Caco-2 (cell line): ENCODE measurements at regions of chr20 and their contacts with region 1.

Region 1: DNA sequence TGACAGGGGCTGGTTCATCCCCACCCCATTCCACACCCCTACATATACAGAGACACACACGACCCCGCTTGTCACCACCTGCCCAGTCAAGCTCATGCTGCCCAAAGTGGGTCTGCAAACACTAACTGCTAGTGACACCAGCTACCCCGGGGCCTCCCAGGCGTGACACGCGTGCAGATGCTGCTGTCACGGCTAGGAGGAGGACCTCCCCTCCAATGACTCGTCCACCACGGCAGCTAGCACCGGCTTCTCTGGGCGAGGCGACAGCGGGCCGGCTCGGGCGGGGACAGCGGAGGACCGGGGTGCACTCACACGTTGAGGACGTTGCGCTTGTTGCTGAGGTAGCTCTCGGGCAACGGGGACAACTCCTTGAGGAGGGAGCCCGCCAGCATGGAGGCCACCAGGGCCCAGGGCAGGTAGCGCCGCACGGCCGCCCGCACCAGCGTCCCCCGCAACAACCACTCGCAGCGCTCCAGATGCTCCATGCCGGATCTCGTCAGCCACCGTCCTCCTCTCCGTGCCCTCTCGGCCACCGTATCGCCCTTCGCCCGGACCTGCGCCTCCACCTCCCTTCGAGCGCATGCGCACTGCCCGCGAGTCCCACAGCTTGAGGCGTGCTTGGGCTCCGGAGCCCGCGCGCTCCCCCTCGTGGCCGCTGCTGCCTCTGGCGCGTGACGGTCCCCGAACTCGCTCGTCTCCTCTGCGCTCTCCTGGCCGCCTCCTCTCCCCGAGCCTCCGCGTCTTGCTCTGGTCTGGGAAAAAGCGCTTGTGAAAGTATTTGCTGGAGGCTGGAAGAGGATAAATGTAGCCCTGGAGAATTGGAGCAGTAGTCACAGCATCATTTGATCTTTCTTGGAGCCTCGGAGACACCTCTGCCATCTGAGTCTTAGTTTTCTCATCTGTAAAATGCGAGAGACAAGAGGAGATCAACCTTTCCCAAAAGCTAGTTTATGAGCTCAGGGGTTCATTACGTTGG is at the start of gene FITM2:
- DNase-seq: peak; percentile 100
- H3K4me3 ChIP-seq: peak within 1 kb of the TSS; percentile 77
- H3K4me3 Mint-ChIP-seq: peak within 1 kb of the TSS; percentile 84
- H3K27ac Mint-ChIP-seq: peak within 1 kb of the TSS; percentile 48
- H3K4me1 ChIP-seq: peaks cover 10% of the 10 kb centered on the region
- H3K4me1 Mint-ChIP-seq: peaks cover 13% of the 10 kb centered on the region
- H3K27me3 ChIP-seq: no peaks in the 10 kb centered on the region
- H3K27me3 Mint-ChIP-seq: no peaks in the 10 kb centered on the region
- CTCF ChIP-seq: peak; percentile 100
- total RNA-seq, gene FITM2: 13.9 and 14.4 TPM in 2 replicates

Region 2: DNA sequence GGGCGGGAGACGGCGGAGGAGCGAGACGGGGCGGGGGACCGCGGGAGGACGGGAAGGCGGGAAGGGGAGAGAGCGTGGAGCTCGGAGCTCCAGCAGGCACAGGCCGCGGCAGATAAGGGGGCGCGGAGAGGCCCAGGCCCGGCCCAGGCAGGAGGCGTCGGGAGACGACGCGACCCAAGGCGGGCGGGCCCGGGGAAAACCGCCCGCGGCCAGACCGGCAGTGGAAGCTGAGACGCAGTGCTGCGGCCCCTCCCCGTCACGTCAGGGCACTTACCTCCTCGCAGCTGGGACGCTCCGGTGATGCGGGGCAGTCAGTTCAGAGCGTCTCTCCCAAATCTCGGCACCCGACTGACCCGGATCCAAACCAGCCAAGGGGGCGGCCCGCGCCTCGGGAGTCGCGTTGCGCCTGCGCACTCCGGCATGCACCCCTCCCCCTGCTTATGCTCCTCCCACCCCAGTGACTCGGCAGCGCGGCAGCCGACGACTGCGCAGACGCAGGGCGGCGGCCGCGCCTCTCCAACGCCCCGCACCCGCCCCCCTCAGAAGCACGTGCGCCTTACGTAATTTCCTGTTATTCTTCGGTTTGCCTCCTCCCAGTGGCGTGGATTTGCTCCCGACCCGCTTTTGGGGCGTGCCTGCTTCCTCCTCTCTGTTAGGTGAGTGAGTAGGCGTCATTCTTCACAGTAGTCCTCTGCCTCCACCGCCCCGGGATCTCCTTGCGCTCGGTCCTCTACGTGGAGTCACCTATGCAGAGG is 100.4 kb before region 1 on chr20 and contains the start of gene OSER1:
- CTCF ChIA-PET with region 1: interaction called, 244 read pairs
- POLR2A ChIA-PET with region 1: no interaction called
- intact Hi-C with region 1: no loop called
- DNase-seq: peak; percentile 100
- H3K4me3 ChIP-seq: peak within 1 kb of the TSS; percentile 74
- H3K4me3 Mint-ChIP-seq: peak within 1 kb of the TSS; percentile 95
- H3K27ac Mint-ChIP-seq: peak within 1 kb of the TSS; percentile 96
- H3K4me1 ChIP-seq: peaks cover 19% of the 10 kb centered on the region
- H3K4me1 Mint-ChIP-seq: peaks cover 27% of the 10 kb centered on the region
- H3K27me3 ChIP-seq: no peaks in the 10 kb centered on the region
- H3K27me3 Mint-ChIP-seq: no peaks in the 10 kb centered on the region
- CTCF ChIP-seq: no peak
- total RNA-seq, gene OSER1: 79.7 and 82.3 TPM in 2 replicates

Region 3: DNA sequence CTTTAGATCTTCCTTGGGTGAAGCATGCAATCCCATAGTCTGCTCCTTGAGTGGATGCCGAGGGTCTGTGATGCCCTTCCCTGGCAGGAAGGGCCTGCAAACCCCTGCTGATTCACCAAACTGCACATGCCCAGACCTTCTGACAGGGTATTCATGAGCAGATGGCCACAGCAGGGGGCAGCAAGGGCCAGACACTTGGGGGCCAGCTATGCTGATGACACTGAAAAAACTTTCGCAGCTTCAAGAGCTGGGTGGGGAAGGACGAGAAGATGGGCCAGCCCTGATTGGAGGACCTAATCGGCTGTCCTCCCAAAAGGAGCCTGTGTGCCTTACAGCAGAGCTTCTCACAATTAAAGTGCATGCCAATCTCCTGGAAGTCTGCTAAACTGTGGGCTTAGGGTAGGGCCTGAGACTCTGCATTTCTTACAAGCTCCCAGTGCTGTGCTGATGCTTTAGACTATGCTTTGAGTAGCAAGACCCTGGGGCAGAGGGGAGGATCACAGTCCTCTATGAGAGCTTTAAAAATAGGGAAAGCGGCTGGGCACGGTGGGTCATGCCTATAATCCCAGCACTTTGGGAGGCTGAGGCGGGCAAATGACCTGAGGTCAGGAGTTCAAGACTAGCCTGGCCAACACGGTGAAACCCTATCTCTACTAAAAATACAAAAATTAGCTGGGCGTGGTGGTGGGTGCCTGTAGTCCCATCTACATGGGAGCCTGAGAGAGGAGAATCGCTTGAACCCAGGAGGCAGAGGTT is 79.1 kb before region 1 on chr20:
- CTCF ChIA-PET with region 1: interaction called, 17 read pairs
- POLR2A ChIA-PET with region 1: interaction called, 3 read pairs
- intact Hi-C with region 1: no loop called
- DNase-seq: peak; percentile 48 to 51
- H3K4me3 ChIP-seq: no peak overlapping the region
- H3K4me3 Mint-ChIP-seq: no peak overlapping the region
- H3K27ac Mint-ChIP-seq: no peak overlapping the region
- H3K4me1 ChIP-seq: no peaks in the 10 kb centered on the region
- H3K4me1 Mint-ChIP-seq: peaks cover 12% of the 10 kb centered on the region
- H3K27me3 ChIP-seq: no peaks in the 10 kb centered on the region
- H3K27me3 Mint-ChIP-seq: no peaks in the 10 kb centered on the region
- CTCF ChIP-seq: peak in 1 of 2 experiments; percentile 22

Region 4: DNA sequence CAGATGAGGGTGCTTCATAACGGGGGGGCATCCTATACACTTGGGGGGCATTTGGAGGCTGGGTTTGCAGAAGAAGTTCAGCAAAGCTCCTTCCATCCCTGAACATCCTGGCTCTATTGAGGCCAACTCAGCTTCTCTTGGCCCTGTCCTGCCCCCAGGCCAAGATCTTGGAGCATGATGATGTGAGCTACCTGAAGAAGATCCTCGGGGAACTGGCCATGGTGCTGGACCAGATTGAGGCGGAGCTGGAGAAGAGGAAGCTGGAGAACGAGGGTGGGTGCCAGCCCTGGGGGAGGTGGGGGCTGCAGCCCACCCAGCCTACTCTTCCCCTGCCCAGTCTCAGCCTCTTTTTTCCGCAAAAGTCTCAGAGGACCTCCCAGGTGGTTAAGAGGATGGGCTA is 46.7 kb before region 1 on chr20:
- CTCF ChIA-PET with region 1: interaction called, 22 read pairs
- POLR2A ChIA-PET with region 1: no interaction called
- intact Hi-C with region 1: no loop called
- DNase-seq: peak; percentile 63 to 70
- H3K4me3 ChIP-seq: no peak overlapping the region
- H3K4me3 Mint-ChIP-seq: no peak overlapping the region
- H3K27ac Mint-ChIP-seq: no peak overlapping the region
- H3K4me1 ChIP-seq: no peaks in the 10 kb centered on the region
- H3K4me1 Mint-ChIP-seq: no peaks in the 10 kb centered on the region
- H3K27me3 ChIP-seq: no peaks in the 10 kb centered on the region
- H3K27me3 Mint-ChIP-seq: peaks cover 14% of the 10 kb centered on the region
- CTCF ChIP-seq: no peak

Region 5: DNA sequence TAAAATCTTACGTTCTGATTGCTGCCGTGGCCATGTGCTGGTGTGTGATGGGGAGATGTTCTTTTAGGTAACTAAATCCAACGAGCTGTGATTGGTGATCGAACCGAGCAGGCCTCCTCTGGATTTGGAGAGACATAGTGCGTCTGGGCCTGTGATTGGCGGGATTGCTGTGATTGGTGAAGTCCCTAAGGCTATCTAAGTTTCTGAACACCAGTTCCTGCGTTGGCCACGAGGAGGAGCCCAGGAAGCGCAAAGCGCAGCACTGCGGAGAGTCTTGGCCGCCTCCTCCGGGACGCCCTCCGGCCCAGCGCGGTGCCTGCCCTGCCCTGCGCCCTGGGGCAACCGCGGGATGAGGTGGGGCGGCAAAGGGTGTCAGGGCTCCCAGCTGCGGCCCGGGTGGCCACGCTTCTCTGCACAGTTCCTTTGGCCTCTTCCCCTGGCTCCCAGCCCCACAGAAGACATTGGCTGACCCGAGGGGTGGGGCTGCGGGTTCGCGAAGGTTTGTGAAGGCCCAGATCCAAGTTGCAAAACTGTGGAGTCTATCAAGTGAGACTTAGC is 77.6 kb after region 1 on chr20:
- CTCF ChIA-PET with region 1: interaction called, 22 read pairs
- POLR2A ChIA-PET with region 1: interaction called, 6 read pairs
- intact Hi-C with region 1: loop called (anchors 1 kb)
- DNase-seq: peak in 1 of 2 experiments; percentile 75
- H3K4me3 ChIP-seq: no peak overlapping the region
- H3K4me3 Mint-ChIP-seq: no peak overlapping the region
- H3K27ac Mint-ChIP-seq: peak overlapping the region; percentile 18
- H3K4me1 ChIP-seq: peaks cover 60% of the 10 kb centered on the region
- H3K4me1 Mint-ChIP-seq: peaks cover 53% of the 10 kb centered on the region
- H3K27me3 ChIP-seq: no peaks in the 10 kb centered on the region
- H3K27me3 Mint-ChIP-seq: no peaks in the 10 kb centered on the region
- CTCF ChIP-seq: peak; percentile 73 to 78

Region 6: DNA sequence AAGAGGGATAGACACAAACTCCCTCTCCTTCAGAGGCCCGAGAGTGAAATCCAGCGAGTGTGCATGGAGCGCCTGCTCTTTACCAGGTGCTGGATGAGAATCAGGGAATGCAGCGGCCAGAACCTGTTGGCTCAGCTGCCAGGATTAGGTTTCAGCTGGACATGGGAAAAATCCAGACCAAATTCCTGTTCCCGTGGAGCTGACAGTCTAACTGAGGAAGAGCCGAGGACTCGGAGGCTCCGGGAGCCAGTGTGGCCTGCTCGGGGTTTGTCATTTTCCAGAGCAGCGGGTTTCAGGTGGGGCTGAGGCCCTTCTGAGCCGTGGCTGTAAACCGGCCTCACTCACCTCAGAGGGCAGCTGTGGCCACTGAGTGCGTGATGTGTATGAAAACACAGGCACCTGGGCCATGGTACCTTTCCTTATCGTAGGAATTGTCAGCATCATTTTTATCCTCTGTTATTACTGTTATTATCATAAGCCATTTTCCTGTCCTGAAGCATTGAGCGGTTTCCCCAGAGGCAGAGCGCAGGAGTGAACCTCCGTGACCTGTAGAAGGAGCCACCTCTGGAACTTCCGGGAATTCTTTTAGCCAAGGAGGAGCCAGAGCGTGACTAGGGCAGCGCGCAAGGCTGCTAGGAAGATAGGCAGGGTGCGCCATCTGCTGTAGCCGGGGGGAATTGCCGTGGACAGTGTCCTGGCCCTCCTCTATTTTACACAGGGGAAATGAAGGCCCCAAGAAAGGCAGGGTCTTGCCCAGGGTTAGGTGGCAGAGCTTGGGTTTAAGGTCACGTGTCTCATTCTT is 298.8 kb after region 1 on chr20:
- CTCF ChIA-PET with region 1: interaction called, 7 read pairs
- POLR2A ChIA-PET with region 1: no interaction called
- intact Hi-C with region 1: loop called (anchors 5 kb)
- DNase-seq: peak; percentile 97 to 99
- H3K4me3 ChIP-seq: peak overlapping the region; percentile 19
- H3K4me3 Mint-ChIP-seq: peak overlapping the region; percentile 71
- H3K27ac Mint-ChIP-seq: peak overlapping the region; percentile 91
- H3K4me1 ChIP-seq: peaks cover 12% of the 10 kb centered on the region
- H3K4me1 Mint-ChIP-seq: peaks cover 9% of the 10 kb centered on the region
- H3K27me3 ChIP-seq: no peaks in the 10 kb centered on the region
- H3K27me3 Mint-ChIP-seq: no peaks in the 10 kb centered on the region
- CTCF ChIP-seq: peak; percentile 100